Calu3 (cell line): ENCODE measurements at regions of chr3 and their contacts with region 1.

Region 1: DNA sequence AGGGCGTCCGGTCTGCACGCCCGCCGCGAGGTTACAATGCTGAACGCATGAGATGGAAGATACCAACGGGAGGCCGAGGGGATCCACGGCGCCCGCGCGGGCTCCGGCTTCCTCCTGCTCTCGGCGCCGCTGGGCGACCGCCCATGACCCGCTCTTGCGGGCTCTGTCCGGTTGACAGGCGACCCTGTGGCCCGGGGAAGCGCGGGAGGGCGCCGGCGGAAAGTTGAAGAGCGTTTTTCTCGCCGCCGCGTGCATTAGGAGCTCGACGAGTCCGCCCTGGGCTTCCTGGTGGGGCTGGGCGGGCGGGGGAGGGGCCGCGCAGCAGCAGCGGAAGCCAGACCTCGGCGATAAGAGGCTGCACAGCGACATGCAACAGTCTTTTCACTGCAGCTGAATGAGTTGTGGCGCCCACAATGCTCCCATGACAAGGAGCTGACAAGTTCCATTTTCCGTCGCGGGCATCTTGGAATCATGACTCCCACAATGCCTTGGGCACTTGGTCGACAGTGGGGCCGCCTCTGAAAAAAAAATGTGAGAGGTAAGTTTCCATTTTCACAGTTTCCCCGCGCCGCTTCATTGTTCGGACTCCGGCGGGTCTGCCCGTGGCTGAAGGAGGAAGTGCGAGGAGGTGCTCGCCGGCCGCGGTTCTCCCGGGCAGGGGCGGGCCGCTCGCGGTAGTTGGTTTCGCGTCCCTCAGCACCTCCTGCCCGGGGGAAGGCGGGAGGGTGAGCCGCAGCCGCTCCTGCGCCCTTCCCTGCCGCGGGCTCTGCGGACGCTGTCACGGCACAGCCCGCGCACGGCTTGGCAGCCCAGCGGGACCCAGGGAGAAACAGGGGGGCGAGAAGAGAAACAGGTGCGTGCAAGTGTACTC is at the start of gene MBNL1:
- DNase-seq: peak; percentile 80
- H3K4me3 Mint-ChIP-seq: peak within 1 kb of the TSS; percentile 88
- H3K27ac Mint-ChIP-seq: peak within 1 kb of the TSS; percentile 94
- H3K4me1 Mint-ChIP-seq: peaks cover 46% of the 10 kb centered on the region
- H3K27me3 Mint-ChIP-seq: no peaks in the 10 kb centered on the region
- CTCF ChIP-seq: no peak
- total RNA-seq, gene MBNL1: 164 and 183 TPM in 2 replicates

Region 2: DNA sequence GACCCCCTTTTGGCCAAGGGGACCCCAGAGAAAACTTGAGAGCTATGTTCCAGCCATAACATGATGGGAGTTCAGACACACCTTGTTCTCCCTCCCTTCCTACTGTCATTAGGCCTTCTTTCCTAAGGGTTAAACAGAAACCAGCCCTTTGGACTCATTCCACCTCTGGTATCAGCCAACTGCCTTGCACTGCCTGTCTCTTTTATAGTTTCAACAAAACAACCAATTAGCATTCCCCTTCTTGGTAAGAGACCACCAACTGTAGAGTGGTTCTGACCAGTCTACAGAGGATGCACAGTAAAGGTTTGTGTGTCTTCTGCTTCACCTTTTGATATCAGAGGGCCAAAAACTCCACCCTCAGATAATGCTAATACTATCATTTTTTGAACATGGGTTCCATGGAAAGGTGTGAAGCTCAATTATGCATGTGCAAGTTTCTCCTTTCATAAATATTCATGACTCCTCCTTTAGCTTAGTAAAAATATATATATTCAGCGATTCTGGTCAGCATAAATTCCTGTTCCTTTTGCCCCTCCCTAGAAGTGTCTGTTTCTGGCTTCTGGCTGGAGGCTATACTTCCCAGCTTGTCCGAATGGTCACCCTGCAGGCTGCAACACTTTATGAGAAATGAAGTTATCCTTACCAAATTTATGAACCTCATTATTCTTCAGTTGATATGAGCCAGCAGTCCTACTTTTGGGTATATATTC is 1778.4 kb before region 1 on chr3:
- CTCF ChIA-PET with region 1: no interaction called
- intact Hi-C with region 1: no loop called
- DNase-seq: no peak
- H3K4me3 Mint-ChIP-seq: no peak overlapping the region
- H3K27ac Mint-ChIP-seq: no peak overlapping the region
- H3K4me1 Mint-ChIP-seq: peaks cover 14% of the 10 kb centered on the region
- H3K27me3 Mint-ChIP-seq: no peaks in the 10 kb centered on the region
- CTCF ChIP-seq: no peak

Region 3: GRCh38 chr3:151933234-151933853 is 335.4 kb before region 1 on chr3:
- CTCF ChIA-PET with region 1: no interaction called
- intact Hi-C with region 1: no loop called
- DNase-seq: no peak
- H3K4me3 Mint-ChIP-seq: no peak overlapping the region
- H3K27ac Mint-ChIP-seq: no peak overlapping the region
- H3K4me1 Mint-ChIP-seq: no peaks in the 10 kb centered on the region
- H3K27me3 Mint-ChIP-seq: no peaks in the 10 kb centered on the region
- CTCF ChIP-seq: no peak

Region 4: DNA sequence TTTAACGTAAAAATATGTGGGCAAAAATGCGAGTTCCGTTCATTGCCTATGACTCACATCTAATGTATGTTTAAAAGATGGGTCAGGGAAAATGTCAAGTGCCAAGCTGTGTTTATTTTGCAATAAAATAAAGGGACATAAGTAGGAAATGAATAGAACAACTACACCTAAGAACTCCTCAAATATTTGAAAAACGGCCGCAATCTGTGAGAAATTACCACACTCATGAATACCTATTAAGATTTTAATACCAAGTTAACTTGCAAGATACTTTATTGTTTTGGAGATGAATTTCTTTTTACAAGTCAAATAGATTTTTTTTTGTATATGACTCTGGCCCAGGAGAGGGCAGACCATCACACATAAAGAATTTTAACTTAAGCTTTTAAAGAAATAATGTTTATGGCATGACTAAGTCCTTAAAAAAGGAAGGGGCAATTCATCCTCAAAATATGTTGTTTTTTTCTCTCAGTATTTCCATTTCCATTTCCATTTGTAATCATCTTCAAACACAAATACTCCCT is 242.7 kb before region 1 on chr3:
- CTCF ChIA-PET with region 1: interaction called, 3 read pairs
- intact Hi-C with region 1: loop called (anchors 5 kb)
- DNase-seq: peak; percentile 25
- H3K4me3 Mint-ChIP-seq: no peak overlapping the region
- H3K27ac Mint-ChIP-seq: peak overlapping the region; percentile 82
- H3K4me1 Mint-ChIP-seq: peaks cover 56% of the 10 kb centered on the region
- H3K27me3 Mint-ChIP-seq: no peaks in the 10 kb centered on the region
- CTCF ChIP-seq: no peak

Region 5: DNA sequence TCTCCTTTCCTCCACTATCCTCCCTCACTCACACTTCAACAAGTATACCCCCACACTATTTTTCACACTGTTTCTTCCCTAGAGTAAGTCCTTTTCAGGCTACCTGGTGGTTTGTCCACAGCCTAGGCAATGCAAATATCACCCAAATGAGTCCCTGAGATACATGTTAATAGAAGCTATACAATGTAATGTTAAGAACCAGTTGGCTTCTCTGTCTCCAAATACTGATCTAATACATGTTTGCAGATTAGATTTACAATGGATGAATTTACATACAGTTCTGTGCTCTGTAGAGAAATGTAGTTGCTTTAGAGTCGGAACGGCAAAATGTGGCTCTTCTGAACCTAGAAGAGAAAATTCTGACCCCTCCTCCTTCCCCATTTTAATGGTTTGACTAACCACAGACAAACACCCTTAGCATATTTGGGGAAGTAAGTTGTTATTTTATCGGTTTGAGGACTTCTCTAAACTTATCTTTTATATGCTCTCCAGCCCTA is 63.6 kb before region 1 on chr3:
- CTCF ChIA-PET with region 1: interaction called, 3 read pairs
- intact Hi-C with region 1: loop called (anchors 5 kb)
- DNase-seq: no peak
- H3K4me3 Mint-ChIP-seq: no peak overlapping the region
- H3K27ac Mint-ChIP-seq: no peak overlapping the region
- H3K4me1 Mint-ChIP-seq: peaks cover 23% of the 10 kb centered on the region
- H3K27me3 Mint-ChIP-seq: no peaks in the 10 kb centered on the region
- CTCF ChIP-seq: no peak

Region 6: GRCh38 chr3:152222327-152222726 is 46.5 kb before region 1 on chr3:
- CTCF ChIA-PET with region 1: no interaction called
- intact Hi-C with region 1: no loop called
- DNase-seq: no peak
- H3K4me3 Mint-ChIP-seq: no peak overlapping the region
- H3K27ac Mint-ChIP-seq: no peak overlapping the region
- H3K4me1 Mint-ChIP-seq: peaks cover 11% of the 10 kb centered on the region
- H3K27me3 Mint-ChIP-seq: no peaks in the 10 kb centered on the region
- CTCF ChIP-seq: no peak

Region 7: DNA sequence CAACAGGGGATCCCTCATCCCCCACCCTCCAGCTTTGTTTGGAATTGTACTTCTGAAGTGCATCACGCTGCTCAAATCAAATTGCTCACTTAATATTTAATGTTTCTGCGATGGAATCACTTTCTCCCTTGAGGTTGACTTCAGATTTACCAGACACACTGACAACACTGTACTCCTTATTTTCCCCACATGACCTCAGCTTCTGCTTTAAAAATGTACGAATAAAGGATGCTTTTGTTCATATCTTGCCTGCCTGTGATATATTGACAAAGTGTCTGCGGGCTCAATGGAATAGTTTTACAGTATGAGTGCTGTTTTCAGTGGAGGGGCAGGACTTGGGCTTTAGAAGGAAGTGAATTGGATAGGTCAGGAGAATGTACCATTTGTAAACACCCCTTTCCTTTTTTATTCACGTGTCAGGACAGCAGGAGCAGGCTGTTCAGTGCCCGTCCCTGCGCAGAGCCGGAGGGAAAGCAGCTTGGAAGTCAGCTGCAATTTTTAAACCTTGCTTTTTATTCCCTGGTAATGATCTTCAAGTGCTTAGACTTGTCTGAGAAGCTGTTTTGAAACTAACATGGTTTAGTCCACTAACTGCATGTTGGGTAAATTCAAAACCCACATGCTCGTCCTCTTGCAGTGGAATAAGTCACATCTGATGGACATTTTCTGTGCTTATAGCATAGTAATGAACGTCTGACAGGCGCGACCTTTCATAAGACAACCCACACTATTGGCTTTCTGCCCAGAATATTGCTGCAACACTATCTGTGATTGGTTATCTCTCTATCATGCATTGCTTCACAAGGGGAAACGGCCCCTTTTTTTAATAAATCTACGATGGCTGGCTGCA is 29.8 kb after region 1 on chr3:
- CTCF ChIA-PET with region 1: interaction called, 5 read pairs
- intact Hi-C with region 1: loop called (anchors 2 kb)
- DNase-seq: peak; percentile 78
- H3K4me3 Mint-ChIP-seq: peak overlapping the region; percentile 73
- H3K27ac Mint-ChIP-seq: peak overlapping the region; percentile 95
- H3K4me1 Mint-ChIP-seq: peaks cover 49% of the 10 kb centered on the region
- H3K27me3 Mint-ChIP-seq: no peaks in the 10 kb centered on the region
- CTCF ChIP-seq: no peak

Region 8: DNA sequence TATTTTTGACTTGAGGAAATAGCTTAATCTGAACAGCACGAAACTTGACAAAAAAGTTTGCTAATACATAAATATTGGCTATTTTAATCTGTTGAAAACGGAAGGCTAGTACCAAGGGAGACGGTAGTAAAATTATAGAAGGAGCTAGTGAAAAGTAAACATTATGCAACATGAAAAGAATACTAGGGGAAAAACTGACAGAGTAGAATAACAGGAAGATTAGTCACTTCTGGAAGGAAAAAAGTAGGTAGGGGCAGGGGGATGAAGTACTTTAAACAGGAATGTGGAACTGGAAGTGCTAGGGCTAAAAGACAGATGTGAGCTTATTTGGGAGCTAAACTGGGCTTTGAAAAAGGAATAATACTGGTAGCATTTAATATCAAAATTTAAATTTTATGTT is 60.1 kb after region 1 on chr3:
- CTCF ChIA-PET with region 1: no interaction called
- intact Hi-C with region 1: loop called (anchors 2 kb)
- DNase-seq: peak; percentile 28
- H3K4me3 Mint-ChIP-seq: peak overlapping the region; percentile 32
- H3K27ac Mint-ChIP-seq: peak overlapping the region; percentile 88
- H3K4me1 Mint-ChIP-seq: peaks cover 67% of the 10 kb centered on the region
- H3K27me3 Mint-ChIP-seq: no peaks in the 10 kb centered on the region
- CTCF ChIP-seq: no peak

Region 9: GRCh38 chr3:152436707-152437590 is 168.2 kb after region 1 on chr3:
- CTCF ChIA-PET with region 1: interaction called, 5 read pairs
- intact Hi-C with region 1: loop called (anchors 2 kb)
- DNase-seq: no peak
- H3K4me3 Mint-ChIP-seq: peak overlapping the region; percentile 48
- H3K27ac Mint-ChIP-seq: peak overlapping the region; percentile 56
- H3K4me1 Mint-ChIP-seq: peaks cover 47% of the 10 kb centered on the region
- H3K27me3 Mint-ChIP-seq: no peaks in the 10 kb centered on the region
- CTCF ChIP-seq: no peak